HepG2 (cell line): ENCODE measurements at regions of chr9 and their contacts with region 1.

Region 1: DNA sequence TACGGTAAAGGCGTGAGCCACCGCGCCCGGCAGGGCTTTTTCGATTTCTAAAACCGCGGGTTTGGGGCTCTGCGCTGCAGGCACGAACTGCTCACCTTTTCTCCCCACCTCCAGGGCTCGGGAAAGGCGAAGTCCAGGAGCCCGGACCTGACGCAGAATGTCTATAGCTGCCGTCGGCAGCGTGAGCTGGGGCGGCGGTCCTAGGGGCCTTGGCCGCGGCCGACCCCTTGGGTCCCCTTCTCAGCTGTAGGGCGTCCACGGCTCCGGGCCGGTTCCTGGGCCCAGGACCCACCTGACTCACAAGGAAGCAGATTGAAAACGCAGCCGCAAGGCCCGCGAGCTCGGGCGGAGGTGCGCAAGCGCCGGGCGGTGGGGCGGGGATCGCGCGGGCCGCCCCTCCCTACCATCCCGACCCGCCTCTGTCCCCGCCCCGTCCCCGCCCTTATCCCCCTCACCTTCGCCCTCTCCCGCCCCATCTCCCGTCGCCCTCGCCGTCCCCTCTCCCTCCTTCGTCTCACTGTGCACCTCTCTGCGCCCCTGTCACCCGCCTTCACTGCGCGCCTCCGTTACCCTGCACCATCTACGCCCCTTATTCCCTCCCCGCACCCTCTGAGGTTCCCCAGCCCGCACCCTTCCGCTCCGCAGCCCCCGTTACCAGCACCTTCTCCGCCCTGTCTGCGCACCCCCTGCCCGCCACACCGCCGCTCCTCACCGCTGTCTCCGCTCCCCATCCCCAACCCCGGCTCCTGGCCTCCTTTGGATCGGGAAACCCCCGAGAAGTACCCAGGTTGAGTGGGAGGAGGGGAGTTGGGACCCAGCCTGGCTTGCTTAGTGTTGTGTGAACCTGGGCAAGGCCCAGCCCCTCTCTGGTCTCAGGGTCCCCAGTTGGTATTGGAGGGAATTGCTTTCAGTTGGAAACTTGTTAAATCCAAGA is at the start of gene HDHD3:
- DNase-seq: peak; percentile 71
- ATAC-seq: peak; percentile 83
- H3K4me3 ChIP-seq: peak within 1 kb of the TSS; percentile 80 to 99 (median 84)
- H3K27ac ChIP-seq: peak within 1 kb of the TSS; percentile 94
- H3K4me1 ChIP-seq: peaks cover 80% of the 10 kb centered on the region
- H3K27me3 ChIP-seq: no peaks in the 10 kb centered on the region
- CTCF ChIP-seq: no peak
- EP300 ChIP-seq: no peak
- POLR2A ChIP-seq: peak; percentile 70 to 89
- RAD21 ChIP-seq: peak; percentile 62
- total RNA-seq, gene HDHD3: 23.0 and 23.1 TPM in 2 replicates

Region 2: DNA sequence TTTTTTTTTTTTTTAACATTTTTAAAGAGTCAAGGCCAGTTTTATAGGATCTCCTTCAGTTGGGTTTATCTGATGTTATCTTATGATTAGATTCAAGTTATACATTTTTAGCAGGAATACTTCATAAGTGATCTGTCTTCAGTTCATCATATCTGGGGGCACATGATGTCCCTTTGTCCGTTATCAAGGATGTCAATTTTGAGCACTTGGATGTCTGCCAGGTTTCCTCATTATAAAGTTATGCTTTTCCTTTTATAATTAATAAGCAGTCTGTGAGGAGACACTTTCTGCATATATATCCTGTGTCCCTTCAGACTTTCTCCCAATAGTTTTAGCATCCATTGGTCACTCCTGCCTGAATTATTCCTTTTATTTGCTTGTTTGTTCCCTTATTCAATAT is 11.9 kb before region 1 on chr9:
- CTCF ChIA-PET with region 1: no interaction called
- POLR2A ChIA-PET with region 1: interaction called, 16 read pairs
- in situ Hi-C with region 1: no loop called
- intact Hi-C with region 1: no loop called
- DNase-seq: no peak
- ATAC-seq: no peak
- H3K4me3 ChIP-seq: no peak overlapping the region
- H3K27ac ChIP-seq: no peak overlapping the region
- H3K4me1 ChIP-seq: peaks cover 55% of the 10 kb centered on the region
- H3K27me3 ChIP-seq: peaks cover 0 to 6% of the 10 kb centered on the region in 2 experiments; a peak in 1 of 5 replicates
- CTCF ChIP-seq: no peak
- EP300 ChIP-seq: no peak
- POLR2A ChIP-seq: no peak
- RAD21 ChIP-seq: no peak

Region 3: GRCh38 chr9:113387560-113388230 is 10.8 kb after region 1 on chr9:
- CTCF ChIA-PET with region 1: no interaction called
- POLR2A ChIA-PET with region 1: interaction called, 29 read pairs
- in situ Hi-C with region 1: no loop called
- intact Hi-C with region 1: no loop called
- DNase-seq: peak; percentile 91
- ATAC-seq: peak; percentile 95
- H3K4me3 ChIP-seq: peak overlapping the region; percentile 17 to 51 (median 35); a peak in 4 of 6 replicates
- H3K27ac ChIP-seq: peak overlapping the region; percentile 97
- H3K4me1 ChIP-seq: peaks cover 86% of the 10 kb centered on the region
- H3K27me3 ChIP-seq: no peaks in the 10 kb centered on the region
- CTCF ChIP-seq: 0 out of 2 replicates have a peak, but pooled peaks have one; percentile 18
- EP300 ChIP-seq: peak; percentile 41 to 83; a peak in 3 of 4 replicates
- POLR2A ChIP-seq: peak; percentile 63 to 65
- RAD21 ChIP-seq: 0 out of 2 replicates have a peak, but pooled peaks have one; percentile 29